PC-3 (cell line): ENCODE measurements at regions of chr19 and their contacts with region 1.

Region 1: GRCh38 chr19:55146078-55146704 is 2.8 kb downstream of the TNNT1 start:
- DNase-seq: peak; percentile 81
- ATAC-seq: peak; percentile 61
- H3K4me3 ChIP-seq: peak overlapping the region; percentile 76
- H3K27ac ChIP-seq: peak overlapping the region; percentile 33; the same call in 1 of the 2 replicates
- H3K4me1 ChIP-seq: peaks cover 6% of the 10 kb centered on the region; the same call in 1 of the 2 replicates
- H3K27me3 ChIP-seq: no peaks in the 10 kb centered on the region
- CTCF ChIP-seq: peak; percentile 91

Region 2: DNA sequence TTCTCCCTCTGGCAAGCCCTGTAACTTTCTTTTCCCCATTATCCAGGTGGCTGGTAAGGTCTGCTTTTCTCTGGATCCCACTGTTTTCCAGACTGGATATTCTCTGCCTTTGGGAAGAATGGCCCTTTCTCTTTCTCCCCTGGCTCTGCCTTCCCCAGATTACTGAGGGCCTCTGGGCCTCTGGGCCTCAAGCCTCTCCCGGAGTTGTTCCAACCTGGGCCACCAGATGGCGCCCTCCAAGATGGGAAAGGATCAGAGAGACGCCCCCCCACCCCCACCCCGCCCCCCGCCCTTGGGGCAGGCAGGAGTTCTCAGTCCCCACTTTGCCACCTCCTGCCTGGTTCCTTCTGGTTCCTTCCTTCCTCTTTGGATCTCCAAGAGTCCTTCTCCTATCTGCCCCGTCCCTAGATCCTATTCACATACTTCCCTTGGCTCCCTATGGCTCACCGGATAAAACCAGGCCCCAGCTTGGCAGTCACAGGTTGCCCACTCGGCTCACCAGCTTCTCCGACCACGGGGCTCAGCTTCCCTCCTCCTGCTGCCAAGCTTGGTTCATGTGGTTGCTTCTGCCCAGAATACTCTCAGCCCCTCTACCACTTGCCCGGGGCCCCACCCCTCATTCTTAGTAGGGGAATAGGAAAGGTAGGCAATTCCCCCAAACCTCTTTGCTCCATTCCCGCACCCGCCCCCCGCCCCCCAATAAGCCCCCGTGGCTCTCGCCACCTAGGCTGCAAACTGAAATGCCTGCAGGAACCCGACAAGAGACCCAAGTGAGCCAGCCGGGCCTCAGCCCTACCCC is 57.4 kb before region 1 on chr19:
- CTCF ChIA-PET with region 1: interaction called, 14 read pairs
- POLR2A ChIA-PET with region 1: no interaction called
- intact Hi-C with region 1: no loop called
- DNase-seq: peak; percentile 92
- ATAC-seq: peak; percentile 65
- H3K4me3 ChIP-seq: no peak overlapping the region
- H3K27ac ChIP-seq: no peak overlapping the region
- H3K4me1 ChIP-seq: no peaks in the 10 kb centered on the region
- H3K27me3 ChIP-seq: no peaks in the 10 kb centered on the region
- CTCF ChIP-seq: peak; percentile 59

Region 3: GRCh38 chr19:55109527-55110291 is 36.5 kb before region 1 on chr19:
- CTCF ChIA-PET with region 1: no interaction called
- POLR2A ChIA-PET with region 1: no interaction called
- intact Hi-C with region 1: no loop called
- DNase-seq: no peak
- ATAC-seq: no peak
- H3K4me3 ChIP-seq: no peak overlapping the region
- H3K27ac ChIP-seq: no peak overlapping the region
- H3K4me1 ChIP-seq: no peaks in the 10 kb centered on the region
- H3K27me3 ChIP-seq: no peaks in the 10 kb centered on the region
- CTCF ChIP-seq: no peak

Region 4: GRCh38 chr19:55160128-55160985 is 14.2 kb after region 1 on chr19:
- CTCF ChIA-PET with region 1: interaction called, 25 read pairs
- POLR2A ChIA-PET with region 1: interaction called, 5 read pairs
- intact Hi-C with region 1: loop called (anchors 1 kb)
- DNase-seq: peak; percentile 99
- ATAC-seq: peak; percentile 81
- H3K4me3 ChIP-seq: no peak overlapping the region
- H3K27ac ChIP-seq: no peak overlapping the region
- H3K4me1 ChIP-seq: peaks cover 21% of the 10 kb centered on the region
- H3K27me3 ChIP-seq: no peaks in the 10 kb centered on the region
- CTCF ChIP-seq: peak; percentile 99

Region 5: DNA sequence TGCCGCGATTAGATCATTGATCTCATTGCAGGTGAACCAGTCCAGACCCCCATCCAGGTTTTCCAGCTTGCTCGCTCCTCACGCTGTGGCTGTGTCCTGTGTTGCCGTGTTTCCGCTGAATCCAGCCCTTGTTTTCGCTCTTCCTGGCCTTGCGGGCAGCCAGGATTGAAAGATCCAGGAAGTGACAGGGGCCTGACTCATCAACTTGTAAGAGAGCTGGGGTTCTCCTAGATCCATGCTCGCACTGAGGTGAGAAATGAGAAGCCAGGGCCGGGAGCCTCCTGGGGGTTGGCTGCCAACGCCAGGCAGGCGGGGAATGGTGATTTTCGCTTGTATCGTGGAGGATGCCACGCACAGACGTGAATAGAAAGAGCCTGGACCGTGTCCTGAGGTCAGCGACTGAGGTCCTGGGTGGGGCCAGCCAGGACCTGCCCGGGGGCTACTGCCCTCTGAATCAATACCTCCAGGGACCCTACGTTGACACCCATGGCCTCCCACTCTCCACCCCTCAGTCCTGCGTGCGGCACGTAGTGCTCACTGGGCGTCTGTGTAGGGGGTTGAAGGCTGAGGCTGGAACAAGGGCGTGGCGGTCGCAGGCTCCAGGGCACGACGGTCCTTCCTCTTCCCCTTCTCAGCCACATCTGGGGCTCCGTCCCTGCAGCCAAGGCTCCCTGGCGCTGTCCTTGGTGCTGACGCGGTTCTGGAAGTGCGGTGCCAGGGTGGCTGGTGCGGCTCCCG is 70.4 kb after region 1 on chr19:
- CTCF ChIA-PET with region 1: no interaction called
- POLR2A ChIA-PET with region 1: no interaction called
- intact Hi-C with region 1: loop called (anchors 1 kb)
- DNase-seq: peak; percentile 100
- ATAC-seq: peak; percentile 91
- H3K4me3 ChIP-seq: peak overlapping the region; percentile 44
- H3K27ac ChIP-seq: peak overlapping the region; percentile 84
- H3K4me1 ChIP-seq: peaks cover 22% of the 10 kb centered on the region
- H3K27me3 ChIP-seq: no peaks in the 10 kb centered on the region
- CTCF ChIP-seq: no peak

Region 6: GRCh38 chr19:55407800-55408532 is 261.8 kb after region 1 on chr19:
- CTCF ChIA-PET with region 1: interaction called, 18 read pairs
- POLR2A ChIA-PET with region 1: no interaction called
- intact Hi-C with region 1: no loop called
- DNase-seq: peak; percentile 99
- ATAC-seq: peak; percentile 93
- H3K4me3 ChIP-seq: peak overlapping the region; percentile 79
- H3K27ac ChIP-seq: peak overlapping the region; percentile 93
- H3K4me1 ChIP-seq: peaks cover 20% of the 10 kb centered on the region
- H3K27me3 ChIP-seq: no peaks in the 10 kb centered on the region
- CTCF ChIP-seq: no peak

Region 7: GRCh38 chr19:55503502-55504251 is 357.5 kb after region 1 on chr19:
- CTCF ChIA-PET with region 1: interaction called, 4 read pairs
- POLR2A ChIA-PET with region 1: no interaction called
- intact Hi-C with region 1: loop called (anchors 5 kb)
- DNase-seq: peak; percentile 84
- ATAC-seq: peak; percentile 94
- H3K4me3 ChIP-seq: peak overlapping the region; percentile 51; the same call in 1 of the 2 replicates
- H3K27ac ChIP-seq: no peak overlapping the region
- H3K4me1 ChIP-seq: no peaks in the 10 kb centered on the region; the same call in 1 of the 2 replicates
- H3K27me3 ChIP-seq: no peaks in the 10 kb centered on the region
- CTCF ChIP-seq: peak; percentile 98